Caco-2 (cell line): ENCODE measurements at regions of chr3 and their contacts with region 1.

Region 1: GRCh38 chr3:53498806-53499641 is 4.6 kb downstream of the CACNA1D start:
- DNase-seq: peak; percentile 65
- H3K4me3 ChIP-seq: no peak overlapping the region
- H3K4me3 Mint-ChIP-seq: no peak overlapping the region
- H3K27ac Mint-ChIP-seq: no peak overlapping the region
- H3K4me1 ChIP-seq: peaks cover 12% of the 10 kb centered on the region
- H3K4me1 Mint-ChIP-seq: peaks cover 10% of the 10 kb centered on the region
- H3K27me3 ChIP-seq: no peaks in the 10 kb centered on the region
- H3K27me3 Mint-ChIP-seq: no peaks in the 10 kb centered on the region
- CTCF ChIP-seq: peak; percentile 61 to 67

Region 2: GRCh38 chr3:53375019-53375418 is 124.0 kb before region 1 on chr3:
- CTCF ChIA-PET with region 1: interaction called, 4 read pairs
- POLR2A ChIA-PET with region 1: no interaction called
- intact Hi-C with region 1: loop called (anchors 1 kb)
- DNase-seq: peak; percentile 80 to 82
- H3K4me3 ChIP-seq: no peak overlapping the region
- H3K4me3 Mint-ChIP-seq: no peak overlapping the region
- H3K27ac Mint-ChIP-seq: no peak overlapping the region
- H3K4me1 ChIP-seq: no peaks in the 10 kb centered on the region
- H3K4me1 Mint-ChIP-seq: no peaks in the 10 kb centered on the region
- H3K27me3 ChIP-seq: no peaks in the 10 kb centered on the region
- H3K27me3 Mint-ChIP-seq: no peaks in the 10 kb centered on the region
- CTCF ChIP-seq: peak; percentile 86 to 89

Region 3: DNA sequence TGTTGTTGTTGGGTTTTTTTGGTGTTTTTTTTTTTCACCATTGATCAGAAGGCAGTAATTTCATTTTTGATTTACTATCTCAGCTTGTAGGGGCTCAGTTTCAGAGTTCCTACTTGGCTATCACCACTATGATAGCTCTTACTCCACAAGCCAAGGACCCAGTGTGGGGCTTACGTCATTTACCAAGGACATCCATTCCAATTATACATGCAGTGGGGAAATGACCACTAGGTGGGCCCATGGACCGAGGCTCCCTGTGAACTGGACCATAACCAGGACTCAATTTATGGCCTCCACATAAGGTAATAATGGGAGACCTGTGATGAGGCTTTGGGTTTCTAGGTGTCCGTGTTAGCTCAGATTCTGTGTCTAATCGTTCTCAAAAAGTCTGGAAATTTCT is 72.1 kb before region 1 on chr3:
- CTCF ChIA-PET with region 1: no interaction called
- POLR2A ChIA-PET with region 1: no interaction called
- intact Hi-C with region 1: loop called (anchors 1 kb)
- DNase-seq: peak; percentile 44 to 49
- H3K4me3 ChIP-seq: no peak overlapping the region
- H3K4me3 Mint-ChIP-seq: no peak overlapping the region
- H3K27ac Mint-ChIP-seq: no peak overlapping the region
- H3K4me1 ChIP-seq: peaks cover 9% of the 10 kb centered on the region; the same call in 1 of the 2 replicates
- H3K4me1 Mint-ChIP-seq: no peaks in the 10 kb centered on the region
- H3K27me3 ChIP-seq: no peaks in the 10 kb centered on the region; the same call in 1 of the 2 replicates
- H3K27me3 Mint-ChIP-seq: peaks cover 11% of the 10 kb centered on the region
- CTCF ChIP-seq: peak in 1 of 2 experiments; percentile 44